ENCODE measurements at regions of chr2 and their contacts with region 1.

Region 1: GRCh38 chr2:101349893-101350662 is 37.2 kb downstream of the CREG2 start:
- DNase-seq: no peak
- ATAC-seq: no peak

Region 2: DNA sequence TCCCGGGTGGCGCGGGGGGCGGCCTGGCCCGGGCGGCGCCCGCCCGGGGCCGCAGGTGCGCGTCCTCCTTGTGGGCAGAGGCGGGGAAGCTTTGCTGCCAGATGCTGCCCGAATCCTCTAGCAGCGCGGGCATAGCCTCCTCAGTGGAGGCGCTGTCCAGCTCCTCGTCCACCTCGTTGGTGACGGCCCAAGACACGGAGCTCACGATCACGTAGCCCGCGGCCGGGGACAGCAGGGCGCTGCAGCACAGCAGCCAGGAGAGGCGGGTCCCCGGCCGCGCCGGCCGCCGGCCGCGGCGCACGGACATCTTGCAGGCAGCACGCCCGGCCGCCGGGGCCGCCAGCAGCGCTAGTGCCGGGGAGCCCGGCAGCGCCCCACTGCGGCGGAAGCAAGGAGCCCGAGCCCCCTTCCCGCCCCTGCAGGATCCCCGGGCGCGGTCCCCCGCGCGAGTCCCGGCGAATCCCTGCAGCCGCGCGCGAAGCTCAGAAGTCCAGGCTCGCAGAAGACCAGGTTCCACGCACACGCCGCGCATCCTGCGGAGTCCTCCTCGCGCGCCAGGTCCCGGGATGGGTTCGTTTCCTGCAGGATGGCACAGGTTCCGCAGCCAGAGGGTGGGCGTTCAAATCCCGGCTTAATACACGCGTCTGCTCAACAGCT is 37.2 kb after region 1 on chr2 and contains the start of gene CREG2:
- intact Hi-C with region 1: no loop called
- DNase-seq: peak; percentile 83
- ATAC-seq: peak; percentile 80
- total RNA-seq, gene CREG2: not detected

Region 3: DNA sequence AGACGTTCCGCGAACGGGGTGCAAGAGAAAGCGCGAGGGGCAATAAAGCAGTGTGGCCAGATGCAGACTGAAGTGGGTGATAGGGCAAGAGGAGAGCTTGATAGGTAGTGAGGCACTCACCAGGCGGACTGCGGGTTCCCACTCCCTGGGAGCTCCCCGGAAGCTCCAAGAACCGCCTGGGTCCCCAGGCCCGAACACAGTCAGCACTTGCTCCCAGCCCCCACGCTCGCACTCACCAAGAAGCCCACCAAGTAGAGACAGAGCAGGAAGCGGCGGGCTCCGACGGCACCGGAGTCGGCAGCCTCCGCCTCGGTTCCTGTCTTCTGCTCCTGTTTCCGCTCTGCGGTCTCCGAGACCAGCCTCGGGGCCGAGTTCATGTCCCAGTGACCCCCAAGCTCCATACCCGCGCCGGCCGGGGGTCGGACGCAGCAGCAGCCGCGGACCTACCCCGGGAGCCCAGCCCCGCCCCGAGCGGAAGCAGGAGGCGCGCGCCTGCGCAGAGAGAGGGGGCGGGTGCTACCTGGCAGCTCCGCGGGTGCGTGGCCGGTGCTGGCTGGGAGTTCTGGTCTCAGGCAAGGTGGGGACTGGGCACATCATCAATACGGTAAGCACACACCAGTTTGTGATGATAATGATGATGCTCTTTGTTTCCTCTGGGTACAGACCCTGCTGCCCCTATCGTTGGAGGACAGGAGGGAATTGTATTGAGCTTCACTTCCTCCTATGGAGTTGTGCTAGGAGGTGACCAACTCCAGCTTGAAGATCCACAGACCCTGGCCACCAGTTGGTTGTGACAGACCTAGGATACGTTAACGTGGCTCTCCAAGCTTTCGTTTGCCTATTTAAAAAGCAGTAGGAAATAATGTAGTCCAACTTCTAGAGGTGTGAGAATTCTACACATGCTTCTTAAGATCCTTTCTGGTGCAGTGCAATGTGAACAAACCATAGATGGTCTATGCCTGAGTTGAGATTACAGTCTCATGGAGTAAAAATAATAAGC is 1386.6 kb after region 1 on chr2:
- intact Hi-C with region 1: loop called (anchors 10 kb)
- DNase-seq: peak; percentile 96
- ATAC-seq: peak; percentile 97

Measured in Right ventricle myocardium inferior (tissue), 1 donor.